ENCODE measurements at regions of chr15 and their contacts with region 1.

Region 1: GRCh38 chr15:55993111-55993803 is at the start of gene NEDD4:
- DNase-seq: peak; percentile 91
- ATAC-seq: peak; percentile 98
- total RNA-seq, gene NEDD4: 9.7 TPM

Region 2: GRCh38 chr15:55897560-55898336 is 95.5 kb before region 1 on chr15:
- intact Hi-C with region 1: loop called (anchors 5 kb)
- DNase-seq: no peak
- ATAC-seq: peak; percentile 75

Region 3: GRCh38 chr15:56038015-56038414 is 44.8 kb after region 1 on chr15:
- intact Hi-C with region 1: loop called (anchors 5 kb)
- DNase-seq: no peak
- ATAC-seq: no peak

Region 4: GRCh38 chr15:56052395-56053045 is 59.3 kb after region 1 on chr15:
- intact Hi-C with region 1: loop called (anchors 5 kb)
- DNase-seq: no peak
- ATAC-seq: no peak

Region 5: GRCh38 chr15:56243163-56244037 is 250.1 kb after region 1 on chr15 and contains the start of gene RFX7:
- intact Hi-C with region 1: loop called (anchors 5 kb)
- DNase-seq: peak; percentile 90
- ATAC-seq: peak; percentile 91
- total RNA-seq, gene RFX7: 5.8 TPM

Measured in Right ventricle myocardium inferior (tissue), 1 donor.